ENCODE measurements at regions of chr2 and their contacts with region 1.

Region 1: GRCh38 chr2:177263451-177264208 is 897 bp downstream of the NFE2L2 start:
- DNase-seq: peak; percentile 98 to 100 (median 99)
- ATAC-seq: peak; percentile 83 to 85
- H3K4me3 ChIP-seq: peak overlapping the region; percentile 90
- H3K27ac ChIP-seq: peak overlapping the region; percentile 100
- H3K4me1 ChIP-seq: no peaks in the 10 kb centered on the region
- H3K27me3 ChIP-seq: no peaks in the 10 kb centered on the region

Region 2: DNA sequence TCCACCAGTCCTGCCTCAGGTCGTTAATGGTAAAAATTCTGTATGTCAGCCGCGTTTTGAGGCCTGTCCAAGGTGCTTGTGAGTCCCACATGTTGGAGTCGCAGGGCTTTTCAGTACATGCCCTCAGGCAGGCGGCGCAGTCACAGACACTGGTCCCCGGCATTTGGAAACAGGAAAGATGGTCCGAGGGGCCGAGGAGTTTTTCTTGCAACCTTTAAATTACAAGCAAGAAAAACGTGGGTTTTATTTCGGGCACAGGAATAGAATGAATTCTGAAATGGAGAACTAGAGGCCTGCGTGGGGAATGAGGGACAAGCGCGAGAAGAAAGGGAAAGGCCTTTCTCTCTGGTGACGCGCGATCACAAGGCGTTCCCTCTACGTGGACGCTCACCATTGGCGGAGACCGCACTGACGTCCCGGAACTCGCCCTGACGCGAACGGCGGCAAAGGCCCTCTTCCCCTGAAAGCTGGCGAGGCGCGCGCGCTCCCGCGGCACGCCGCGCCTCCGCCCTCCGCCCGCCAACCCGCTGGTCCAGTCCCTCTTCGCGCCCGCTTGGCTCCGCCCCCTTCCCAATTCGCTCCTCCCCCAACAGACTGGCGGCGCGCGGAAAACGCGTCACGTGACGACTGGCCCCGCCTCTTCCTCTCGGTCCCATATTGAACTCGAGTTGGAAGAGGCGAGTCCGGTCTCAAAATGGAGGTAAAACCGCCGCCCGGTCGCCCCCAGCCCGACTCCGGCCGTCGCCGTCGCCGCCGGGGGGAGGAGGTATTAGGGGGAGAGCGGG is 51.3 kb before region 1 on chr2 and contains the start of gene HNRNPA3:
- intact Hi-C with region 1: loop called in 2 of 4 experiments (anchors 5 kb)
- DNase-seq: peak; percentile 99 to 100 (median 99)
- ATAC-seq: peak; percentile 96 to 97
- H3K4me3 ChIP-seq: peak within 1 kb of the TSS; percentile 97
- H3K27ac ChIP-seq: peak within 1 kb of the TSS; percentile 100
- H3K4me1 ChIP-seq: peaks cover 3% of the 10 kb centered on the region
- H3K27me3 ChIP-seq: no peaks in the 10 kb centered on the region
- total RNA-seq, gene HNRNPA3: 66.9 to 110 (median 84.2) TPM

Region 3: GRCh38 chr2:177314194-177314593 is 50.6 kb after region 1 on chr2:
- intact Hi-C with region 1: no loop called
- DNase-seq: no peak
- ATAC-seq: peak; percentile 84 to 93
- H3K4me3 ChIP-seq: no peak overlapping the region
- H3K27ac ChIP-seq: no peak overlapping the region
- H3K4me1 ChIP-seq: no peaks in the 10 kb centered on the region
- H3K27me3 ChIP-seq: no peaks in the 10 kb centered on the region

Region 4: DNA sequence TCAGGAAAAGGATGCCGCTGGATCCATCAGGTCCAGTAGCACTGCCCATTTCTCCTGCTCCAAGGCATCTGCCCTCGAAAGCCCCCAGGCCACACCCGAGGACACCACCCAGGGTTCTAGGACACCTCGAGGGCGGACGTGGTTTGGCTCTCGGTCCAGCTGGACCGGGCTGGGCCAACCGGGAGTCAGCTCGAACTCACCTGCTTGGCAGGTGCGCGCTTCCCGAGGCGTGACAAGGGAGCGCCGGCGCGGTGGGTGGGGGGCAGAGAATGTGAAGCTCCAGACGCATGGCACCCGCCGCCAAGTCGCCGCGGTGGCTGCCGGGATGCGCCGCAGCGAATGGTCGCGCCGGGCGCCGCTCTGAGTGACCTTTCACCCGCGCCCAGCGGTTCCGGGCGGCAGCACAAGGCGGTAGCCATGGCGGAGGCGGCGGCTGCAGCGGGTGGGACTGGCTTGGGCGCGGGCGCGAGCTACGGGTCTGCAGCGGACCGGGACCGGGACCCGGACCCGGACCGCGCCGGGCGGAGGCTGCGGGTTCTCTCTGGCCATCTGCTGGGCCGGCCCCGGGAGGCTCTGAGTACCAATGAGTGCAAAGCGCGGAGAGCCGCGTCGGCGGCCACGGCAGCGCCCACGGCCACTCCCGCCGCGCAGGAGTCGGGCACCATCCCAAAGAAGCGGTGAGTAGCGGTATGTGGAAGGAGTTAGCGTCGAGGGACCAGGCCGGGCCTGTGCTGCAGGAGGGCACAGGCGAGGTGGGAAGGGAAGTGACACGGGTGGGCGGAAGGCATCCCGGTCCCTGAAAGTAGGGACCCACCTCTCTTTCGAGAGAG is 129.0 kb after region 1 on chr2 and contains the start of gene AGPS:
- intact Hi-C with region 1: loop called in 1 of 4 experiments (anchors 10 kb)
- DNase-seq: peak; percentile 87 to 94 (median 93)
- ATAC-seq: peak; percentile 97
- H3K4me3 ChIP-seq: peak within 1 kb of the TSS; percentile 43
- H3K27ac ChIP-seq: peak within 1 kb of the TSS; percentile 34
- H3K4me1 ChIP-seq: no peaks in the 10 kb centered on the region
- H3K27me3 ChIP-seq: no peaks in the 10 kb centered on the region
- total RNA-seq, gene AGPS: 19.0 to 26.0 (median 24.6) TPM